ENCODE measurements at regions of chr6 and their contacts with region 1.

Region 1: GRCh38 chr6:154360476-154360875 is 3.9 kb upstream of the IPCEF1 start:
- DNase-seq: no peak
- H3K4me3 ChIP-seq: no peak overlapping the region
- H3K27me3 ChIP-seq: no peaks in the 10 kb centered on the region
- CTCF ChIP-seq: no peak

Region 2: DNA sequence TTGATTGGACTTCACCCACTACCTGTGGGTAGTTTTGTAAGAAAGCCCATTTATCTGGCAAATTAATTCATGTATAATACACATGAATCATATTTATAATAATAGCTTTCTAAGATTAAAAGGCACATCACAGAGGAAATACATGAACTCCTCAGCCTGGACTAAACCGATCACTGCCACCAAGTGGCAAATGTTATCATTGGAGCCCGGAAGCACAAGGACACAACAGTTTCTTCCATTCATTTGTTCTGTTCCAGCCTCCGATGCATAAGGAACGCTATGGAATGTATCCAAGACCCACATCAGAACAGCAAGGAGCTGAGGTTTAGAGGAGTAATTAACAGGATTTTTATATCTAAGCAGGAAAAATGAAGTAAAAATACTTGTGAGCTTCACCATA is 10.1 kb after region 1 on chr6:
- CTCF ChIA-PET with region 1: interaction called, 11 read pairs
- POLR2A ChIA-PET with region 1: no interaction called
- DNase-seq: peak; percentile 3
- H3K4me3 ChIP-seq: no peak overlapping the region
- H3K27me3 ChIP-seq: 0 out of 2 replicates have a peak, but pooled peaks cover 1% of the 10 kb centered on the region
- CTCF ChIP-seq: peak; percentile 58

Measured in BJ (cell line).